Common myeloid progenitor, CD34-positive (primary cell): ENCODE measurements at regions of chr13 and their contacts with region 1.

Region 1: DNA sequence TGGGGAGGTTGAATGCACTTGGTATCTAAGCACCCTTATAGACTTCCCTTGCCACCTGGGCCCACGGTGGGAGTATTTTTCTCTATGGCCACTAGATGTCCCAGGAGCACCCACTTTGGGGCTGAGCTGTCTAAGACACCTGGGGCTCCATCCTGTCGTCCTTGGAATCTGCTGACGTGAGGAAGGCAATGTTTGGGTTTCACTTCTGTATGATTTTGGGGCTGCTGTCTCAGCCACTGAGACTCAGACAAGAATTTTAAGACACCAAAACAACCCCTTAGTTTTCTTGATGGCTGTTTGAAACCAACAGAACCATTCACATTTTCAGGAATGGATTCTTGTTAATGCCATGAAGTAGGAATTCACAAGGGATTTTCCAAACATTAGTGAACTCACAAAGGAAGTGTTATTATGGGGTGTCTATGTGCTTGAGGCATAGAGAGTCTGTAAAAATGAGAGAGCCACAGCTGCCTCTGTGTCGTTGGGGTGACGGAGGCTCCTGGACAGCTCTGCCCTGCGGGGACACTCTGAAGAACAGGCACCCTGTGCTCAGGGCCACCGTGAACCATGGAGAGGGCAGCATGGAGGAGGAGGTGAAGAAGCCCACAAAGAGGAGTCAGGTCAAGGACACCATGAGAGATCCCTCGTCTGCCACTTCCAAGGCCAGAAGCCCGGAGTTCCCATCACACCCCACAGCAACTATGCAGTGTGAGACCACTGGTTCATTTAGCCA is 106.8 kb upstream of the SPATA13 start:
- DNase-seq: peak; percentile 64 to 81 (median 78)
- H3K4me3 ChIP-seq: no peak overlapping the region
- H3K27ac ChIP-seq: no peak overlapping the region
- H3K4me1 ChIP-seq: peaks cover 0 to 16% (median 1%) of the 10 kb centered on the region in 4 experiments
- H3K27me3 ChIP-seq: no peaks in the 10 kb centered on the region

Region 2: DNA sequence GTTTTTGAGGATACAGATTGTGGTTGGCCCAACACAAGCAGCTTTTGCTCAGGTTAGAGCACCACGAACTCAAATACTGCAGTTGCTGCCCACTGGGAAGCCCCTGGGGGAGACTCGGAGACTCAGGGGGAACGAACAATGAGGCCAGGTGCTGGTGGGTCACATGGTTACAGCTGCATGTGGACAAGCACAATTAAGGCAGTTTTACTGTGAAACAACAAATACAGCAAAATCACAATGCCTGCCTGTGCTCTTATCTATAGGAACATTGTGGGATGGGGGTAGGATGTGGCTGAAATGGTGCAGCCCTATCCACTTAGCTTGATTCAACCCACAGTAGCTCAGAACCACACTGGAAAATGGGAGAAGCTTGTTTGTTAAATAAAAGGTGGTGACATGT is 12.8 kb before region 1 on chr13:
- CTCF ChIA-PET with region 1: interaction called, 17 read pairs
- POLR2A ChIA-PET with region 1: no interaction called
- DNase-seq: peak in 1 of 3 donors; percentile 6
- H3K4me3 ChIP-seq: no peak overlapping the region
- H3K27ac ChIP-seq: no peak overlapping the region
- H3K4me1 ChIP-seq: peaks cover 3 to 13% (median 10%) of the 10 kb centered on the region in 4 experiments
- H3K27me3 ChIP-seq: no peaks in the 10 kb centered on the region

Region 3: GRCh38 chr13:24135674-24136300 is 82.1 kb after region 1 on chr13:
- CTCF ChIA-PET with region 1: no interaction called
- POLR2A ChIA-PET with region 1: no interaction called
- DNase-seq: no peak
- H3K4me3 ChIP-seq: no peak overlapping the region
- H3K27ac ChIP-seq: no peak overlapping the region
- H3K4me1 ChIP-seq: no peaks in the 10 kb centered on the region
- H3K27me3 ChIP-seq: peaks cover 0 to 2% (median 0%) of the 10 kb centered on the region in 5 experiments

Region 4: DNA sequence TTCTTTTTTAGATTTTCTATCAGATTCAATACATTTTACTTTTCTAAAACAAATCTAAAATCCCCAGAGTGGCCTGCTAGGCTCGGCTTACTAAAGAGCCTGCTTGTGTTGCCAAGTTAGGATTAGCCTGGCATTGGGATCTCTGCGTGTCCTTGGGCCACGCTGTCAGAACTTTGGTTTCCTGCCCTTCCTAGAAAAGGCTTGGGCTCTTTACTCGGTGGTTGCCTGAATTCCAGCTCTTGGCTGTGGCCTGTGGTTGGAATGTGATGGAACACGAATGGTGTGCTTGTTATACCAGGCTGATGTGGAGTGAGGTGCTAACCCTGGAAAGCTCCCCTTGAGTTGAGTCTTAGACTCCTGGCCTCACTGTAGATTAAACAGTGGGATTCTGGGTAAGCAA is 115.3 kb after region 1 on chr13:
- CTCF ChIA-PET with region 1: no interaction called
- POLR2A ChIA-PET with region 1: no interaction called
- DNase-seq: no peak
- H3K4me3 ChIP-seq: no peak overlapping the region
- H3K27ac ChIP-seq: no peak overlapping the region
- H3K4me1 ChIP-seq: no peaks in the 10 kb centered on the region
- H3K27me3 ChIP-seq: no peaks in the 10 kb centered on the region

Region 5: GRCh38 chr13:24995226-24995804 is 941.6 kb after region 1 on chr13:
- CTCF ChIA-PET with region 1: no interaction called
- POLR2A ChIA-PET with region 1: no interaction called
- DNase-seq: peak; percentile 85 to 93 (median 91)
- H3K4me3 ChIP-seq: no peak overlapping the region
- H3K27ac ChIP-seq: no peak overlapping the region
- H3K4me1 ChIP-seq: no peaks in the 10 kb centered on the region
- H3K27me3 ChIP-seq: peaks cover 0 to 13% (median 12%) of the 10 kb centered on the region in 5 experiments